H1 (cell line): ENCODE measurements at regions of chr1 and their contacts with region 1.

Region 1: DNA sequence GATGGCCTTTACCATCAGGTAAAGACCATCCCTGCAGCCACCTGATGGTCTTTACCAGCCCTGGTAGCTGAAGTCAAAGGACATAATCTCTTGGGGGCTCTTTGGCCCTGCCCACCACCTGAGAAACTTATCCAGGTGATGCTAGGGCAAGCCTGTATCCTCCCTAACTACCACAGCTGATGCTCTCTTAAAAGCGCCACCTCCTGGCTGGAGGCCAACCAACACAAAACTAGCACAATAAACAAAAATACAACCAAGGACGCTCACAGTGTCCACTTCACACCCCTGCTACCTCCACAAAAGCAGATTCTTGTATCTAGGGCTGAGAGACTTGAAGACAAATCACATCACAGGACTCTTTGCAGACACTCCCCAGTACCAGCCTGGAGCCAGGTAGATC is 357.1 kb upstream of the POU3F1 start:
- DNase-seq: peak in 1 of 2 experiments; percentile 62
- H3K4me3 ChIP-seq: no peak overlapping the region
- H3K27ac ChIP-seq: no peak overlapping the region
- H3K4me1 ChIP-seq: no peaks in the 10 kb centered on the region
- H3K27me3 ChIP-seq: no peaks in the 10 kb centered on the region
- CTCF ChIP-seq: peak; percentile 27 to 62 (median 47); a peak in 3 of 4 replicates
- EP300 ChIP-seq: no peak
- POLR2A ChIP-seq: no peak
- RAD21 ChIP-seq: peak; percentile 42 to 61; a peak in 3 of 4 replicates

Region 2: DNA sequence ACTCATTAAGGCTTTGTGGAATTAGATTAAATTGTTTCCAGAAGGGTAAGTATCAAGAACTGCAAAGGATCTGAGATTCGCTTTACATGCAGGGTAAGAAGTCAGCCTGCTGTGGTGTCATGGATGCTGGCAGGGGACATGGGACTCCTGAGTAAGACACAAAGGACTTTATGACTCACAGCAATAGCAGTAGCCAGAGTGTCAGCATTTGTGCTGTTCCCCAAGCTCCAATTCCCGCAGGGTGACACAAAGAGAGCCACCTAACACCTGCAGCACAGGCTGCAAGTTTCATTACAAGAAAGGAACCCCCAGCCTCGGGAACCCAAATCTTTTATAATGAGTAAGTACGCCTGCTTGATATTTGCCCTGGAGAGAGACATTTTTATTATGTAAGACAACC is 59.0 kb before region 1 on chr1:
- CTCF ChIA-PET with region 1: no interaction called
- POLR2A ChIA-PET with region 1: no interaction called
- DNase-seq: no peak
- H3K4me3 ChIP-seq: no peak overlapping the region
- H3K27ac ChIP-seq: no peak overlapping the region
- H3K4me1 ChIP-seq: peaks cover 0 to 2% (median 0%) of the 10 kb centered on the region in 4 experiments; a peak in 2 of 7 replicates
- H3K27me3 ChIP-seq: no peaks in the 10 kb centered on the region
- CTCF ChIP-seq: no peak
- EP300 ChIP-seq: no peak
- POLR2A ChIP-seq: no peak
- RAD21 ChIP-seq: no peak

Region 3: DNA sequence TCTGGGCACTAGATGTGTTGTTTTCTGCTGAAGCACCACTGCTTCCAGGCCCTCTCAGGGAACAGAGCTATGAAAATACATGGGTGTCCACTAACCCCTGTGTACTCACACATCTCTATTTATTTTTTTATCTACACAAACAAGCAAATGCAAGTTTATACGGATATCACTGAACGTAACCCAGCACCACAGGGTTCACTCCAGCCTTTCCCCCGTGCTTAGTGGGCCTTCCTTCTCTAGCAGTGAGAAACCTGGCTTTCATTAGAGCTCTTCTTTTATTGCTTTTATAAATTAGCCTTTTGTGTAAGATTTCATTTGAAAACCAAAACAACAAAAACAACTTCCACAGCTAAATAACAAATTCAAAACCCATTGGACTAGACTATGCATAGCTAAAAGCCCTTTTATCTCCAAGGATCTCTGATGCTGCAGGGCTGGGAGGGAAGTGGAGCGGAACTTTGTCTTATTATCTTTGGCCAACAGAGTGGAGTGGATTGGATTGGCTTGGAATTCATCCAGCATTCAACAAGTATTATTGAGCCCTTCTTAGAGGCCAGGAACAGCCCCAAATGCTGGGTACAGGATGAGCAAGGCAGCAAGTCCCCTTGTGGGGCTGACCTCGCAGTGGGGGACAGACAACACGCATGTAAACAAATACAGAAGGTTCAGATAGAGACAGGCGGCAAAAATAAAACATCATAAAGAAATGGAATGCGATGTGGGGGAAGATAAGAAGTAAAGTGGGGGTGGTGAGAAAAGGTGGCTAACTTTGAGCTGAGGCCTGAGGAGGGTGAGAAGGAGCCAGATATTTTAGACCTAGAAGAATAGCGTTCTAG is 14.7 kb after region 1 on chr1:
- CTCF ChIA-PET with region 1: interaction called, 12 read pairs
- POLR2A ChIA-PET with region 1: interaction called, 3 read pairs
- DNase-seq: no peak
- H3K4me3 ChIP-seq: no peak overlapping the region
- H3K27ac ChIP-seq: no peak overlapping the region
- H3K4me1 ChIP-seq: peaks cover 0 to 2% (median 1%) of the 10 kb centered on the region in 4 experiments; a peak in 3 of 7 replicates
- H3K27me3 ChIP-seq: no peaks in the 10 kb centered on the region
- CTCF ChIP-seq: no peak
- EP300 ChIP-seq: no peak
- POLR2A ChIP-seq: no peak
- RAD21 ChIP-seq: no peak

Region 4: DNA sequence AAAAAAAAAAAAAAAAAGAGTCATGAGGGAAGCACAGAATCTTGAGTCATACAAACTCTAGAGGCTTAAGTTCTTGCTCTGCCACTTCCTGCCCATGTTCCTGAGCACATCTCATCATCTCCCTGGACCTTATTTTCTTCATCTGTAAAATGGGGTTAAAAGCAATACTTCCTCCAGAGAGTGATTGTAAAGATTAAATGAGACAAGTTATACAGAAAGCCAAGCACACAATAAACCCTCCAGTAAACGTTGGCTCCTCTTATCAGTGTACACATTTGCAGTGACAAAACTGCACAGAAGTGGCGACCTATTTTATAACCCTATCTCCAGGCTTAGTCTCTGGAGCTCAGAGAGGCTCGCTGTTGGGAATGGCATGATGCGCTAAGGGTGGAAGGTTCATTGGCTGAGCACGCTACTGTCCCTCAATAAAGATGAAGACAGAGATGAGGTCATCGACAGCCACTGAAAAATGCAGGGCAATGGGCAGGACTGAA is 373.8 kb after region 1 on chr1:
- CTCF ChIA-PET with region 1: no interaction called
- POLR2A ChIA-PET with region 1: no interaction called
- DNase-seq: no peak
- H3K4me3 ChIP-seq: no peak overlapping the region
- H3K27ac ChIP-seq: no peak overlapping the region
- H3K4me1 ChIP-seq: no peaks in the 10 kb centered on the region; a peak in 2 of 7 replicates
- H3K27me3 ChIP-seq: no peaks in the 10 kb centered on the region
- CTCF ChIP-seq: no peak
- EP300 ChIP-seq: no peak
- POLR2A ChIP-seq: no peak
- RAD21 ChIP-seq: no peak